ENCODE measurements at regions of chr10 and their contacts with region 1.

Region 1: DNA sequence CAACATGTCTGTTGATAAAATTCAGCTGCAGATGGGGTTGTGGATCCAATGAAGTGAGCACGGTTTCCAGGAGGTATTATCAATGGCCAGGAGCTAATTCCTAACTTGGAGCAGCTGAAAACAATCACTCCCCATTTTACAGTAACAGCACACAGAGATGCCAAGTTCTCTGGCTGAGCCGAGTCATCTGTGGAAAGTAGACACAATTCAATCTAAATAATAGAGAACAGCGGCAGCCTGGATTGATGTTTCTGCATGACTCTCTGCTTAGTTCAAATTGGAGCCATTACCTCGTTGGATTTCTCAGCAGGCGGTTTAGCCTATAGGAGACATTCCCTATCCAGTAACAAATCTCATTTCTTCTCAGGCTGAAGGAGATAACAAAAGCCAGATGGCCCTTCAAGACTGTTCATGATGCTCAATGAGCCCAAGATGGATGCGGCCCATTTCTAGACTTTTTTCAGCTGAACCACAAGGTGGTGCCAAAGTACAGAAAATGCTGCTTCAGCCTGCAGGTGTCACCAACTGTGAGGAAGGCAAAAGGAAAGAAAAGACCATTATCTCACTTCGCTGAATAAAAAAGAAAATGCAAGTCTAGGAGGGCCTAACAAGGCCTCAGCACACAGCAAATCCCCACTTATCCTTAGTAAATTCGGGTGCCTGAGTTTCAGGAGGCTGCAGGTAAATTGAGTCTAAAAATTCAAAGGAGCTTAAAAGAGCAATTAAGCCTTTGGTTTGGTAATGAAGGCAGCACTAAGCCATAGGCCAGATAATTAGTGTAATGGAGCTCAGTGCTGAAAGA is 83.7 kb downstream of the SLC16A9 start:
- DNase-seq: peak; percentile 58
- H3K4me3 ChIP-seq: no peak overlapping the region
- H3K27ac ChIP-seq: no peak overlapping the region
- H3K4me1 ChIP-seq: no peaks in the 10 kb centered on the region
- H3K27me3 ChIP-seq: no peaks in the 10 kb centered on the region
- CTCF ChIP-seq: peak; percentile 79 to 92 (median 86)
- POLR2A ChIP-seq: no peak

Region 2: GRCh38 chr10:59830601-59831259 is 204.8 kb after region 1 on chr10:
- intact Hi-C with region 1: loop called (anchors 10 kb)
- DNase-seq: peak; percentile 71
- H3K4me3 ChIP-seq: no peak overlapping the region
- H3K27ac ChIP-seq: no peak overlapping the region
- H3K4me1 ChIP-seq: no peaks in the 10 kb centered on the region
- H3K27me3 ChIP-seq: no peaks in the 10 kb centered on the region
- CTCF ChIP-seq: peak; percentile 58 to 77 (median 66)
- POLR2A ChIP-seq: no peak